B cell (primary cell): ENCODE measurements at regions of chr11 and their contacts with region 1.

Region 1: GRCh38 chr11:79493555-79494171 is 52.8 kb upstream of the TENM4 start:
- DNase-seq: peak; percentile 70
- ATAC-seq: peak; percentile 60
- H3K4me3 ChIP-seq: no peak overlapping the region
- H3K4me3 Mint-ChIP-seq: no peak overlapping the region
- H3K27ac ChIP-seq: no peak overlapping the region
- H3K27ac Mint-ChIP-seq: no peak overlapping the region
- H3K4me1 ChIP-seq: no peaks in the 10 kb centered on the region
- H3K4me1 Mint-ChIP-seq: no peaks in the 10 kb centered on the region
- H3K27me3 ChIP-seq: peaks cover 0 to 3% (median 0%) of the 10 kb centered on the region in 4 experiments
- H3K27me3 Mint-ChIP-seq: peaks cover 12% of the 10 kb centered on the region
- CTCF ChIP-seq: peak; percentile 86

Region 2: GRCh38 chr11:79400717-79401686 is 92.7 kb before region 1 on chr11:
- CTCF ChIA-PET with region 1: interaction called, 76 read pairs
- POLR2A ChIA-PET with region 1: no interaction called
- intact Hi-C with region 1: no loop called
- DNase-seq: peak; percentile 30
- ATAC-seq: peak; percentile 56
- H3K4me3 ChIP-seq: no peak overlapping the region
- H3K4me3 Mint-ChIP-seq: no peak overlapping the region
- H3K27ac ChIP-seq: no peak overlapping the region
- H3K27ac Mint-ChIP-seq: no peak overlapping the region
- H3K4me1 ChIP-seq: peaks cover 3 to 5% of the 10 kb centered on the region in 2 donors
- H3K4me1 Mint-ChIP-seq: peaks cover 7% of the 10 kb centered on the region
- H3K27me3 ChIP-seq: peaks cover 0 to 11% (median 0%) of the 10 kb centered on the region in 4 experiments
- H3K27me3 Mint-ChIP-seq: peaks cover 8% of the 10 kb centered on the region
- CTCF ChIP-seq: peak; percentile 54

Region 3: GRCh38 chr11:79440441-79441194 is 53.0 kb before region 1 on chr11 and contains the start of gene TENM4:
- CTCF ChIA-PET with region 1: interaction called, 16 read pairs
- POLR2A ChIA-PET with region 1: no interaction called
- intact Hi-C with region 1: no loop called
- DNase-seq: peak; percentile 85
- ATAC-seq: peak; percentile 76
- H3K4me3 ChIP-seq: peak within 1 kb of the TSS in 4 of 5 experiments; percentile 45 to 66 (median 60)
- H3K4me3 Mint-ChIP-seq: peak within 1 kb of the TSS; percentile 91
- H3K27ac ChIP-seq: peak within 1 kb of the TSS; percentile 61 to 91
- H3K27ac Mint-ChIP-seq: peak within 1 kb of the TSS; percentile 93
- H3K4me1 ChIP-seq: peaks cover 44% of the 10 kb centered on the region in 2 donors
- H3K4me1 Mint-ChIP-seq: peaks cover 40% of the 10 kb centered on the region
- H3K27me3 ChIP-seq: peaks cover 0 to 48% (median 30%) of the 10 kb centered on the region in 4 experiments
- H3K27me3 Mint-ChIP-seq: peaks cover 42% of the 10 kb centered on the region
- CTCF ChIP-seq: peak; percentile 64
- total RNA-seq, gene TENM4: 2.1 and 5.7 TPM in 2 replicates

Region 4: GRCh38 chr11:79461144-79461543 is 32.5 kb before region 1 on chr11:
- CTCF ChIA-PET with region 1: interaction called, 32 read pairs
- POLR2A ChIA-PET with region 1: no interaction called
- intact Hi-C with region 1: loop called (anchors 1 kb)
- DNase-seq: no peak
- ATAC-seq: no peak
- H3K4me3 ChIP-seq: no peak overlapping the region
- H3K4me3 Mint-ChIP-seq: no peak overlapping the region
- H3K27ac ChIP-seq: no peak overlapping the region
- H3K27ac Mint-ChIP-seq: no peak overlapping the region
- H3K4me1 ChIP-seq: no peaks in the 10 kb centered on the region
- H3K4me1 Mint-ChIP-seq: no peaks in the 10 kb centered on the region
- H3K27me3 ChIP-seq: peaks cover 0 to 4% (median 3%) of the 10 kb centered on the region in 4 experiments
- H3K27me3 Mint-ChIP-seq: peaks cover 23% of the 10 kb centered on the region
- CTCF ChIP-seq: no peak

Region 5: DNA sequence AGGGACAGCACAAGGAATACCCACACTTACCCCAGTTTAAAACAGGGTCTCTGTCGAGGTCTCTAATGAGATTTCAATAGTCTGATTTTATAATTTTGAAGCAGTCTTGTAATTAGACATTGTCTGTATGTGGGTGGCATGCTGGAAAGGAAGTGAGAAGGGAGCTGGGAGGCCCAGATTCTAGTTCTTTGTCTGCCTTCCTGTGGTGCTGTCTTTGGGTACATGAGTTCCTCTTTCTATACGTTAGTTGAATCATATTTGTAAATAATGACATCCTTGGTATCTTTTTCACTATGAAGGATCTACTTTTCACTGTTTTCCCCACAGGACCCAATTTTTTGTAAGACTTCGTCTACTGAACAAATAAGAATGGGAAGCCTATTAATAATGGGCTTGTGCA is 10.9 kb before region 1 on chr11:
- CTCF ChIA-PET with region 1: interaction called, 13 read pairs
- POLR2A ChIA-PET with region 1: no interaction called
- intact Hi-C with region 1: no loop called
- DNase-seq: peak; percentile 53
- ATAC-seq: peak; percentile 77
- H3K4me3 ChIP-seq: no peak overlapping the region
- H3K4me3 Mint-ChIP-seq: peak overlapping the region; percentile 19
- H3K27ac ChIP-seq: peak overlapping the region; percentile 15 to 16
- H3K27ac Mint-ChIP-seq: peak overlapping the region; percentile 70
- H3K4me1 ChIP-seq: peaks cover 19 to 24% of the 10 kb centered on the region in 2 donors
- H3K4me1 Mint-ChIP-seq: peaks cover 29% of the 10 kb centered on the region
- H3K27me3 ChIP-seq: no peaks in the 10 kb centered on the region
- H3K27me3 Mint-ChIP-seq: no peaks in the 10 kb centered on the region
- CTCF ChIP-seq: no peak